Activated CD4-positive, alpha-beta T cell treated with anti-CD3 and anti-CD28 coated beads for 36 hours (primary cell): ENCODE measurements at regions of chr2 and their contacts with region 1.

Region 1: DNA sequence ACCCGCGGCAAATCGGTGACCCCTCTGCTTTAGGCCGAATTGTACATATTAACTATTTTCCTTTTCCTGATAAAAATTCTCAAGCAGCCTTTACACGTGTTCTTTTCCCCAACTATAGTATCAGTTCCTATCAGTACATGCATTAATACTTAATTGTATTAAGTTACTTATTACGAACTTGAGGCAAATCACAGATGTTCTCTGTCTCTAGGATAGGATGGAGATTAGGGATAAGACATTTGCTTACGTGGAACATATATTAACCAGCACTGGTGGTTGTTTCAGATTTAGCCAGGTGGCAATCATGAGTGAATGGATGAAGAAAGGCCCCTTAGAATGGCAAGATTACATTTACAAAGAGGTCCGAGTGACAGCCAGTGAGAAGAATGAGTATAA is 675 bp downstream of the GEMIN6 start:
- DNase-seq: no peak
- ATAC-seq: no peak
- H3K4me3 Mint-ChIP-seq: peak overlapping the region; percentile 97
- H3K27ac Mint-ChIP-seq: peak overlapping the region; percentile 95
- H3K4me1 Mint-ChIP-seq: peaks cover 7% of the 10 kb centered on the region
- H3K27me3 Mint-ChIP-seq: peaks cover 13% of the 10 kb centered on the region

Region 2: GRCh38 chr2:38720613-38721241 is 58.0 kb before region 1 on chr2:
- CTCF ChIA-PET with region 1: no interaction called
- POLR2A ChIA-PET with region 1: no interaction called
- intact Hi-C with region 1: no loop called
- DNase-seq: no peak
- ATAC-seq: no peak
- H3K4me3 Mint-ChIP-seq: peak overlapping the region; percentile 27
- H3K27ac Mint-ChIP-seq: peak overlapping the region; percentile 78
- H3K4me1 Mint-ChIP-seq: peaks cover 75% of the 10 kb centered on the region
- H3K27me3 Mint-ChIP-seq: no peaks in the 10 kb centered on the region

Region 3: GRCh38 chr2:38875576-38876367 is 97.1 kb after region 1 on chr2 and contains the starts of genes DHX57 and MORN2:
- CTCF ChIA-PET with region 1: no interaction called
- POLR2A ChIA-PET with region 1: no interaction called
- intact Hi-C with region 1: loop called (anchors 1 to 2 kb)
- DNase-seq: peak; percentile 91
- ATAC-seq: peak; percentile 99
- H3K4me3 Mint-ChIP-seq: peak within 1 kb of the TSS; percentile 98
- H3K27ac Mint-ChIP-seq: peak within 1 kb of the TSS; percentile 90
- H3K4me1 Mint-ChIP-seq: peaks cover 18% of the 10 kb centered on the region
- H3K27me3 Mint-ChIP-seq: no peaks in the 10 kb centered on the region
- total RNA-seq, gene DHX57: 14.0 to 20.3 TPM
- total RNA-seq, gene MORN2: 6.6 to 7.9 TPM